ENCODE measurements at regions of chr6 and their contacts with region 1.

Region 1: DNA sequence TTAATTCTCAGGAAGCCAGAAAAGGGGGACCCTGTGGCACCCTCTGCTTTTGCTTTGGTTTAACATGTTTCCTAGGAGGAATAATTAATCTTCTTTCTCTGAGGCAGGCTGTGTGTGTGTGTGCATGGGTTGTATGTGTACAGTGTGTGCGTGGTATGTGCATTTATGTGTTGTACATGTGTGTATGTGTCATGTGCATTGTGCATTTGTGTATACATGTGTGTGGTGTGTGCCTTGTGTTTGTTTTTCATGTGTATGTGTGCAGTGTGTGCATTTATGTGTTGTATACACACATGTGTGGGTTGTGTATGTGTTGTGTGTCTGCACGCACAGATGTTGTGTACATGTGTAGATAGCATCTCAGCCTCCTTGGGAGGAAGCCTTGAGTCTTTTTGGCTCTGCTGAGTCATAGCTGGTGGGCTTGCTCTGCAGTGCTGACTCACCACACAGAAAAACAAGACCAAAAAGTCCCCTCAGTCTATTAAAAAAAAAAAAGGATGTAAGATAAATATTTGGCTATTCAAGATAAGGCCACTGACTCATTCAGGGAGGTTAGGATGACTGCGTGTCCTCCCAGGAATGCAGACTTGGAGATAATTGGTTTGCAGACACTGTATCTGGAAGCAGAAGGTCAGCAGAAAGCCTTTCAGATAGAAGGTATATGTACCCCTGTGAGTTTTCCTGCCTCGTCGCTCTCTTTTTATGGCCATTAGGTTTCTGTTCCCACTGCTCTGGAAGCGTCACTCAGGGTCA is 58.6 kb downstream of the SYNJ2 start:
- DNase-seq: peak; percentile 57
- ATAC-seq: peak; percentile 16 to 79

Region 2: GRCh38 chr6:157981395-157982296 is 58.6 kb before region 1 on chr6 and contains the start of gene SYNJ2:
- intact Hi-C with region 1: loop called in 1 of 2 experiments (anchors 5 kb)
- DNase-seq: peak; percentile 82
- ATAC-seq: peak; percentile 91 to 93
- total RNA-seq, gene SYNJ2: 10.2 to 23.4 TPM

Measured in left cardiac atrium (tissue), 4 donors.